Naive thymus-derived CD8-positive, alpha-beta T cell (primary cell): ENCODE measurements at regions of chr1 and their contacts with region 1.

Region 1: GRCh38 chr1:18938008-18938706 is 18.3 kb downstream of the IFFO2 start:
- DNase-seq: no peak
- ATAC-seq: no peak
- H3K4me3 Mint-ChIP-seq: no peak overlapping the region
- H3K27ac Mint-ChIP-seq: peak overlapping the region in 5 of 10 donors; percentile 1 to 72 (median 34)
- H3K4me1 Mint-ChIP-seq: peaks cover 39 to 88% (median 76%) of the 10 kb centered on the region in 4 donors
- H3K27me3 Mint-ChIP-seq: no peaks in the 10 kb centered on the region

Region 2: GRCh38 chr1:18890711-18891425 is 47.3 kb before region 1 on chr1:
- POLR2A ChIA-PET with region 1: no interaction called
- DNase-seq: no peak
- ATAC-seq: no peak
- H3K4me3 Mint-ChIP-seq: no peak overlapping the region
- H3K27ac Mint-ChIP-seq: no peak overlapping the region
- H3K4me1 Mint-ChIP-seq: peaks cover 0 to 1% (median 0%) of the 10 kb centered on the region in 4 donors
- H3K27me3 Mint-ChIP-seq: no peaks in the 10 kb centered on the region

Region 3: GRCh38 chr1:18949686-18950400 is 11.7 kb after region 1 on chr1:
- POLR2A ChIA-PET with region 1: interaction called, 430 read pairs
- DNase-seq: peak in 1 of 10 donors; percentile 34
- ATAC-seq: no peak
- H3K4me3 Mint-ChIP-seq: peak overlapping the region; percentile 76 to 95 (median 85)
- H3K27ac Mint-ChIP-seq: peak overlapping the region; percentile 95 to 100 (median 98)
- H3K4me1 Mint-ChIP-seq: peaks cover 60 to 98% (median 97%) of the 10 kb centered on the region in 4 donors
- H3K27me3 Mint-ChIP-seq: no peaks in the 10 kb centered on the region